ENCODE measurements at regions of chr21 and their contacts with region 1.

Region 1: GRCh38 chr21:38355992-38356797 is 99.4 kb downstream of the KCNJ15 start:
- DNase-seq: peak; percentile 69 to 81
- H3K4me3 ChIP-seq: no peak overlapping the region
- H3K4me3 Mint-ChIP-seq: no peak overlapping the region
- H3K27ac Mint-ChIP-seq: no peak overlapping the region
- H3K4me1 ChIP-seq: no peaks in the 10 kb centered on the region
- H3K4me1 Mint-ChIP-seq: no peaks in the 10 kb centered on the region
- H3K27me3 ChIP-seq: no peaks in the 10 kb centered on the region
- H3K27me3 Mint-ChIP-seq: peaks cover 8% of the 10 kb centered on the region
- CTCF ChIP-seq: peak; percentile 92

Region 2: GRCh38 chr21:37758982-37759381 is 597.2 kb before region 1 on chr21:
- CTCF ChIA-PET with region 1: no interaction called
- POLR2A ChIA-PET with region 1: no interaction called
- intact Hi-C with region 1: loop called (anchors 1 kb)
- DNase-seq: peak; percentile 54 to 65
- H3K4me3 ChIP-seq: no peak overlapping the region
- H3K4me3 Mint-ChIP-seq: no peak overlapping the region
- H3K27ac Mint-ChIP-seq: no peak overlapping the region
- H3K4me1 ChIP-seq: peaks cover 6% of the 10 kb centered on the region
- H3K4me1 Mint-ChIP-seq: peaks cover 2% of the 10 kb centered on the region
- H3K27me3 ChIP-seq: no peaks in the 10 kb centered on the region
- H3K27me3 Mint-ChIP-seq: no peaks in the 10 kb centered on the region
- CTCF ChIP-seq: peak; percentile 51 to 78

Region 3: GRCh38 chr21:38159355-38159754 is 196.8 kb before region 1 on chr21:
- CTCF ChIA-PET with region 1: no interaction called
- POLR2A ChIA-PET with region 1: no interaction called
- intact Hi-C with region 1: loop called (anchors 1 kb)
- DNase-seq: peak; percentile 59 to 66
- H3K4me3 ChIP-seq: no peak overlapping the region
- H3K4me3 Mint-ChIP-seq: no peak overlapping the region
- H3K27ac Mint-ChIP-seq: no peak overlapping the region
- H3K4me1 ChIP-seq: no peaks in the 10 kb centered on the region
- H3K4me1 Mint-ChIP-seq: no peaks in the 10 kb centered on the region
- H3K27me3 ChIP-seq: no peaks in the 10 kb centered on the region
- H3K27me3 Mint-ChIP-seq: peaks cover 13% of the 10 kb centered on the region
- CTCF ChIP-seq: peak; percentile 60 to 74

Region 4: DNA sequence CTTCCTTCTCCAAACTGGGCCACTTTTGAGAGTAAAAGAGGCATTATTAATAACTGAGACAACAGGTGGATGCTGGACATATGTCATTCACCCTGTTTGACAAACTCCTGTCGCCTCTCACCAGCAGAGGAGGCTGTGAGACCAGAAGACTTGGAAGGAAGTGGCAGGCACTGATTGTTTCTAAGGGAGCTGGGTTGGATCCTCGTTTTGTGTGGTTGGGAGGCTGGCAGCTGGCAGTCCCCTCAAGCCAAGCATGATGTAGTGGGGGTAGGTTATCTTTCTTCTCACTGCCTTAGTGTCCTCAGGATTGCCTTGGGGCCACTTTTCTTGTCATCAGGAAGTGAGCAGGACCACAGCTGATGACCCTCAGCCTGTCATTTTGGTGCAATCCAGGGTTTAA is 185.9 kb before region 1 on chr21:
- CTCF ChIA-PET with region 1: interaction called, 4 read pairs
- POLR2A ChIA-PET with region 1: no interaction called
- intact Hi-C with region 1: loop called (anchors 5 kb)
- DNase-seq: no peak
- H3K4me3 ChIP-seq: no peak overlapping the region
- H3K4me3 Mint-ChIP-seq: no peak overlapping the region
- H3K27ac Mint-ChIP-seq: no peak overlapping the region
- H3K4me1 ChIP-seq: peaks cover 22% of the 10 kb centered on the region
- H3K4me1 Mint-ChIP-seq: peaks cover 6% of the 10 kb centered on the region
- H3K27me3 ChIP-seq: no peaks in the 10 kb centered on the region
- H3K27me3 Mint-ChIP-seq: no peaks in the 10 kb centered on the region
- CTCF ChIP-seq: no peak

Region 5: DNA sequence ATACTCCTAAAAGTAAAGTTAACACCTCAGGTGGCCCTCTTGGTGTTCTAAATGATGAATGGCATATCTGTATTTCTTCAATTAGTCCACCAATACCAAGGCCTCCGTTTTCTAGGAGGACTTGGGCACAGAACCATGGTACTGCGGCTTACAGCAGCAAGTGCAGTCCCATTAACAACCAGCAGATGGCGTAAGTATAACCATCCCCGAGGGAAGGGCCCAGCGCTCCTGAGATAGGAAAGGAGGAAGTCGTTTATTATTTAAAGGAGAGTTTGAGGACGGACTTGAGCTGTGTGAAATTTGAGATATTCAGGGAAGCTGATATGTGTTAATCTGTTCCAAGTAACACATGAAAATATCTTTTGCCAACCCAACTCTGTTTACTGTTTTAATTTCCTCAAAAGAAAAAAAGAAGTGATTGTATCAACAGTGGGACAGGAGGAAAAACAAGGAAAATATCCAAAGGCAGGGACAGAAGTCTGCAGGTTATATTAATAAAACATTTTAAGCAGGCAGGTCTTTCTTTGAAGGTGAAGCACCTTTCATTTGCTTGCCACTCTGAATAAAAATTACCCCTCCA is 137.1 kb before region 1 on chr21:
- CTCF ChIA-PET with region 1: interaction called, 3 read pairs
- POLR2A ChIA-PET with region 1: no interaction called
- intact Hi-C with region 1: loop called (anchors 1 kb)
- DNase-seq: peak; percentile 43 to 49
- H3K4me3 ChIP-seq: no peak overlapping the region
- H3K4me3 Mint-ChIP-seq: no peak overlapping the region
- H3K27ac Mint-ChIP-seq: no peak overlapping the region
- H3K4me1 ChIP-seq: no peaks in the 10 kb centered on the region
- H3K4me1 Mint-ChIP-seq: no peaks in the 10 kb centered on the region
- H3K27me3 ChIP-seq: no peaks in the 10 kb centered on the region
- H3K27me3 Mint-ChIP-seq: peaks cover 3% of the 10 kb centered on the region
- CTCF ChIP-seq: peak; percentile 70 to 76

Measured in Caco-2 (cell line).